ENCODE measurements at regions of chr9 and their contacts with region 1.

Region 1: DNA sequence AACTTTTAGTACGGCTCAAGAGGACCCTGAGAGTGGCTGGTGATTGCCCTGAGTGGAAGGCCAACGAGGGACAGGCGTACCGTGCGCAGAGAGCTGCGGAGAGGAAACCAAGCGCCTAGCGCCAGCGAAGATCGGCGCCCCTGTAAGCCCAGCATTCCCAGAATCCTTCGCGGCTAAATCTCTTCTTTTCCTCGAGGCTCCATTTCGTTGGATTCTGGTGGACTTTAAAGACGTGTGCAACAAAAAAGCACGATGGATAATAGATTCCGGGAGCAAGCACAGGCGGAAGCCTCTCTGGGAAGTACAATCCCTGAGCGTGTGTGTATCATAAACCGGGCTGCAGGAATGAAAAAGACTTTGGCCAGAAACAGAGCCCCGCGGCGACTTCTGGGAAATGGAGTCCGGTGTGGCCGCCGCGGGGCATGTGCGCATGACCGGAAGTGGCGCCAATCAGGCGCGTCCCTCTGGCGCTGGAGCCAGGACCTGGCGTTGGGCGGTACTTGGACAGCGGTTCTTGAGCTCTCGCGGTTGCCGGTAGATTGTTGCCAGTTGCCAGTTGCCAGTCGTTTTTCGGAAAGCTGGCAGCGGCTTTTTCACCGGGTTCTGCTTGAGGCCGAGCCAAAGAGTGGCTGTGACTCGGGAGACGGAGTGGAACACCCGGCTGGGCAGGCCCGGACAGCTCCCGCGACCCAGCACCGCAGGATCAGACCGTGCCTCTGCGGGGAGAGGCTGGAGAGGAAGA is at the start of gene ZNF79:
- H3K4me3 Mint-ChIP-seq: peak within 1 kb of the TSS; percentile 99
- H3K27ac Mint-ChIP-seq: peak within 1 kb of the TSS; percentile 94
- H3K4me1 Mint-ChIP-seq: peaks cover 52% of the 10 kb centered on the region
- H3K27me3 Mint-ChIP-seq: no peaks in the 10 kb centered on the region

Region 2: GRCh38 chr9:127380479-127380878 is 43.6 kb before region 1 on chr9:
- intact Hi-C with region 1: no loop called
- H3K4me3 Mint-ChIP-seq: no peak overlapping the region
- H3K27ac Mint-ChIP-seq: no peak overlapping the region
- H3K4me1 Mint-ChIP-seq: no peaks in the 10 kb centered on the region
- H3K27me3 Mint-ChIP-seq: peaks cover 23% of the 10 kb centered on the region

Region 3: GRCh38 chr9:127396808-127397497 is 27.2 kb before region 1 on chr9 and contains the start of gene SLC2A8:
- intact Hi-C with region 1: loop called (anchors 1 kb)
- H3K4me3 Mint-ChIP-seq: peak within 1 kb of the TSS; percentile 81
- H3K27ac Mint-ChIP-seq: peak within 1 kb of the TSS; percentile 80
- H3K4me1 Mint-ChIP-seq: peaks cover 34% of the 10 kb centered on the region
- H3K27me3 Mint-ChIP-seq: peaks cover 24% of the 10 kb centered on the region

Measured in dendritic cell treated with granulocyte-macrophage colony-stimulating factor and Interleukin-4, amounts not matched to agents 40 ng/mL and 50 ng/mL, for 4 days (primary cell).